Activated T-helper 1 cell treated with anti-CD3 and anti-CD28 coated beads, Interleukin-12 subunit alpha, Interleukin-12 subunit beta, Interleukin-2, Interleukin-4 antibody, amounts not matched to agents 30 ng/mL and 10 ng/mL and 1 ng/mL, durations not matched to agents 14 hours and 24 hours and 36 hours (primary cell): ENCODE measurements at regions of chr10 and their contacts with region 1.

Region 1: GRCh38 chr10:104614245-104614831 is 26.8 kb upstream of the SORCS3 start:
- DNase-seq: no peak
- H3K4me3 Mint-ChIP-seq: no peak overlapping the region
- H3K27ac Mint-ChIP-seq: no peak overlapping the region
- H3K4me1 Mint-ChIP-seq: no peaks in the 10 kb centered on the region
- H3K27me3 Mint-ChIP-seq: peaks cover 6% of the 10 kb centered on the region

Region 2: DNA sequence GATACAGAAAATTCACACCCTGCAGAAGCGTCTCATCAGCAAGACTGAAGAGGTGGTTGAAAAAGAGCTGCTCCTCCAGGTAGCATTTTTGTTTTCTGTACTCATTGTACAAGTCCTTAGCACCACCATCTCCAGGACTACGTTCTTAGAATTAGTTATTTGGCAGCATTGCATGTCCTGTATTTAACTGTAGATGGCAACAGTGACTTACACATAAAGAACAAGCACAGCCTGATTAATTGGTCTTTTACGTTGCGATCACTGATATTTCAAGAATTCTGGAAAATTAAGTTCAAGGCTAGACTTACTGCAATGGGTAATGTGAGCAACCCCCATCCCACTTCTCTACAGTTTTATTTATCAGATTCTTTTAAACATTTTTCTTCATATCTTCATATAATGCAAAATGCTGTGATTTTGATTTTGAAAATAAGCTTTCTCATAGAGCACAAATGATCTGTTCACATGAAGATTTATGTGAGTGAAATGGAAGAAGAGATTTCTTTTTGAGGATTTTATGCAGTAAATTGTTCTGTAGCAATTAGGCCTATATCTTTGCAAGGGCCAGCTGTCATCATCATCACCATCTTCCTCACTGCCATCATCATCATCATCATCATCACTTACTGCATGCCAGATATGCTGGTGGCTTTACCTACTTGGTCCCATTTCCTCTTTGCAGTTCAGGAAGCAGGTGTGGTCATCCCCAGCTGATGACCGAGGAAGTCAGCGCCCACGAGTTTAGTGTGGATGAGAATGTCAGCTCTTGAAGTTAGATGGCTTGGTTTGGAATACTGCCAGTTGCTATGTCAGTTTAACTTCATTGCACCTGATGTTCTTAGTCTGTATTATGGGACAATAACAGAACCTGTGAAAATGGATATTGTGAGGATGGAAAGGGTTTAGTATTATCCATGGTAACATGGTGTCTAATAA is 207.4 kb before region 1 on chr10:
- intact Hi-C with region 1: loop called (anchors 2 kb)
- DNase-seq: no peak
- H3K4me3 Mint-ChIP-seq: no peak overlapping the region
- H3K27ac Mint-ChIP-seq: no peak overlapping the region
- H3K4me1 Mint-ChIP-seq: no peaks in the 10 kb centered on the region
- H3K27me3 Mint-ChIP-seq: peaks cover 2% of the 10 kb centered on the region

Region 3: GRCh38 chr10:104580774-104581675 is 33.3 kb before region 1 on chr10:
- intact Hi-C with region 1: loop called (anchors 1 kb)
- DNase-seq: peak; percentile 38
- H3K4me3 Mint-ChIP-seq: no peak overlapping the region
- H3K27ac Mint-ChIP-seq: no peak overlapping the region
- H3K4me1 Mint-ChIP-seq: peaks cover 5% of the 10 kb centered on the region
- H3K27me3 Mint-ChIP-seq: peaks cover 1% of the 10 kb centered on the region

Region 4: GRCh38 chr10:104650072-104650471 is 35.7 kb after region 1 on chr10:
- intact Hi-C with region 1: no loop called
- DNase-seq: no peak
- H3K4me3 Mint-ChIP-seq: no peak overlapping the region
- H3K27ac Mint-ChIP-seq: no peak overlapping the region
- H3K4me1 Mint-ChIP-seq: no peaks in the 10 kb centered on the region
- H3K27me3 Mint-ChIP-seq: peaks cover 14% of the 10 kb centered on the region

Region 5: DNA sequence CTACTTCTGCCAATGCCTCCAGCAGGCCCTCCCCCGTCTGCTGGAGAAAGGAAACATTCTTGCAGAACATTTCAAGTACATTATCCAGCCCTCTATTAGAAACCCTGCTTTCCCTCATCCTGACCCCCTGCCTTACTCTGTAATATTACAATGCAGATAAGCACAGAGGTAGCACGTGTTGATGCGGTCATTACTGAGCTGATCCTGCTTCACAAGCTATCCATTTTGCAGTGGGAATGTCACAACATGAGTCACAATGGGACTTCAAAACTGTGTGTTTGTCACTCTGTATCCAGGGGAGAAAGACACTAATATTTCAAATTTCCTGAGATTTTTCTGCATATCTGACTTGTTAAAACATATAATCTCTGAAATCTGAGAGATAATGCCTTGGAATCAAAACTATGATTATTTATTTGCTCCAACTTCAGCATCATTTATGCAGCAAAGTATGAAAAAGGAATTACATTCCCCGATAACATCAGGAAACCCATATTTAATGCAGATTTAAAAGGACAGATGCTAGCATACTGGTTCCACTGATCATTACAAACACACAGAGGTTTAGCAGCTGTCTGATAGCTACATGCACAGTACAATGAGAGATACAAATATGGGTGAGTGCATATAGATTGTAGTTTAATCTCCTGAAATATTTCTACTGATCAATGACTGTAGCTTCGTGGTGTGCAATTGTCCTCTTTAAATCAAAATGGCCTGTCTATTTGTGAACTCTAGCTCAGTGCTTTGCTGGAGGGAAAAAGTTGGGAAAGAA is 266.5 kb after region 1 on chr10:
- intact Hi-C with region 1: no loop called
- DNase-seq: no peak
- H3K4me3 Mint-ChIP-seq: no peak overlapping the region
- H3K27ac Mint-ChIP-seq: no peak overlapping the region
- H3K4me1 Mint-ChIP-seq: no peaks in the 10 kb centered on the region
- H3K27me3 Mint-ChIP-seq: no peaks in the 10 kb centered on the region